PC-9 (cell line): ENCODE measurements at regions of chr17 and their contacts with region 1.

Region 1: GRCh38 chr17:74442670-74443515 is 11.0 kb downstream of the GPRC5C start:
- DNase-seq: peak; percentile 75 to 77
- H3K4me3 ChIP-seq: peak overlapping the region; percentile 25; the same call in 1 of the 2 replicates
- H3K27ac ChIP-seq: peak overlapping the region; percentile 25
- H3K4me1 ChIP-seq: peaks cover 14% of the 10 kb centered on the region
- H3K27me3 ChIP-seq: no peaks in the 10 kb centered on the region
- CTCF ChIP-seq: no peak

Region 2: GRCh38 chr17:74280093-74280513 is 162.8 kb before region 1 on chr17:
- CTCF ChIA-PET with region 1: interaction called, 13 read pairs
- POLR2A ChIA-PET with region 1: no interaction called
- intact Hi-C with region 1: no loop called
- DNase-seq: no peak
- H3K4me3 ChIP-seq: no peak overlapping the region
- H3K27ac ChIP-seq: no peak overlapping the region
- H3K4me1 ChIP-seq: no peaks in the 10 kb centered on the region; the same call in 1 of the 2 replicates
- H3K27me3 ChIP-seq: peaks cover 56% of the 10 kb centered on the region
- CTCF ChIP-seq: no peak

Region 3: DNA sequence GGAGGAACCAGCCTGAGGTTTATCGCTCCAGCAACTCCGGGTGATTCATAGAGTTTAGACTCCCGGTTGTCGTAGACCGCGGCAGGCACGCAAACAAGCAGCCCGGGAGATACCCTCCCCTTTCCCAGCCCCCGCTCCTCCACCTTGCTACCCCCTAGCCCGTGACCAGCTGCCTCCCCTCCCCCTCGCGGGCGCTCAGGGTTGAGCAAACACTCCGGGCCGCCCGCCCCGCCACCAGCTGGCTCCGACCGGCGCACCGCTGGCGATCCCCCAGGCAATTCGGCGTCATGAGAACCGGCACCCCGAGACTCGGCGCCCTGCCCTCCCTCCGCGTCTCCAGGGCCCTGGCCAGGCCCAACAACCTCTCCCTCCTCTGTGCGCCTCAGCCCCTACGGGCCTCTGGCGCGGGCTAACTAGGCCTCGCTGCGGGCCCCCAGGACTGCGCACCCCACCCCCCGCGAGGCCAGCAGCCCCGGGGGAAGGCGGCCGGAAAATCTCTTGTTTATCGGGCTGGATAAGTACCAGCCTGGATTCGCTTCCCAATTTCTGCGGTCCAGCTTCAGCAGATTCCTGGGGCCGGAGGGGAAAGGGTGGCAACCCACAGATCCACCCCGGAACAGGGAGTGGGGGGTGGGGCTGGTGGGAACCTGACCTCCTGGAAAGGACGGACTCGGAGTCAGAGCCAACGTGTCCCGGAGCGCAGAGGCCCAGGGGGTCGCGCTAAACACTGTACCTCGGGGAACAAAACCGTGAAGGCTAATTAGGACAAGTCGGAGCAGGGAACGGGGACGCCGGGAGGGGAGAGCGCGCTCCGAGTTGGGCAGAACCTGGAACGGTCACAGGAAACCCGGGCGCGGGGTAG is 12.0 kb before region 1 on chr17:
- CTCF ChIA-PET with region 1: interaction called, 3 read pairs
- POLR2A ChIA-PET with region 1: no interaction called
- intact Hi-C with region 1: loop called (anchors 1 kb)
- DNase-seq: peak; percentile 69 to 83
- H3K4me3 ChIP-seq: peak overlapping the region; percentile 81
- H3K27ac ChIP-seq: peak overlapping the region; percentile 94
- H3K4me1 ChIP-seq: peaks cover 19% of the 10 kb centered on the region
- H3K27me3 ChIP-seq: no peaks in the 10 kb centered on the region
- CTCF ChIP-seq: no peak

Region 4: DNA sequence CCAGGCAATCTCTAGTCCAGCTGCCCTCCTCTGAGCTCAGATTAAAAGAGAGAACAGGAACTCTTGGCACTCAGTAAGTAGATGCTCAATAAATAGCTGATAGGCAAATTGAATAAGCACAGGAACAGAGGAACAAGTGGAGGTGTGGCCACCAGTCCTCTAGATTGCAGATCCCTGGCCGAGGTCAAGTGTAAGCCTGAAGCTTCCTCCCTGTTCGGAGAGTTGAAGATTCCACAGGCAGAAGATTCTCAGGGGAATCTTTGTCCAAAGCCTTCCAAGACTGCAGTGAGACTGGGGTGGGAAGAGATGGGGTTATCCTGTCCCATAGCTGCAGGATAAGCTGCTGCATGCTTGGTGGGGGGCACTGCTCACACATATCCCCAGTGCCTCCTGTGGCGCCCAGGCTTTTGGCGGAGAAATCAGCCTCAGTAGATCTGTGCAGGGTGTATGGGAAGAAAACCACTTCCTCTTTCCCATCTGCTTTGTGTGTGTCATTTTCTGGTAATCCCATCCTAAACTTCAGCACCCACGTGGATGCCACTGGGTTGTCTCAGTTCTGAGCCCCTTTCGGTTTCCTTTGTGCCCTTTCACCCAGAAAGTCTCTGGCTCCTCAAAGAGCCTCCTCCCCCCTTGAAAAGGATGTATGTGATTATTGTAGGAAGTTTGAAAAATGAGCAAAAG is 35.7 kb after region 1 on chr17:
- CTCF ChIA-PET with region 1: no interaction called
- POLR2A ChIA-PET with region 1: no interaction called
- intact Hi-C with region 1: no loop called
- DNase-seq: no peak
- H3K4me3 ChIP-seq: no peak overlapping the region
- H3K27ac ChIP-seq: no peak overlapping the region
- H3K4me1 ChIP-seq: no peaks in the 10 kb centered on the region
- H3K27me3 ChIP-seq: peaks cover 98% of the 10 kb centered on the region
- CTCF ChIP-seq: no peak